ENCODE measurements at regions of chr19 and their contacts with region 1.

Region 1: GRCh38 chr19:37691881-37692504 is 27.6 kb downstream of the ZNF607 start:
- DNase-seq: peak; percentile 54 to 90 (median 80)
- ATAC-seq: peak; percentile 92
- H3K4me3 ChIP-seq: peak overlapping the region; percentile 58 to 73
- H3K4me3 Mint-ChIP-seq: peak overlapping the region; percentile 96
- H3K27ac ChIP-seq: peak overlapping the region; percentile 65 to 74
- H3K27ac Mint-ChIP-seq: peak overlapping the region; percentile 96
- H3K4me1 ChIP-seq: no peaks in the 10 kb centered on the region
- H3K4me1 Mint-ChIP-seq: peaks cover 13% of the 10 kb centered on the region
- H3K27me3 ChIP-seq: no peaks in the 10 kb centered on the region
- H3K27me3 Mint-ChIP-seq: no peaks in the 10 kb centered on the region
- CTCF ChIP-seq: no peak

Region 2: DNA sequence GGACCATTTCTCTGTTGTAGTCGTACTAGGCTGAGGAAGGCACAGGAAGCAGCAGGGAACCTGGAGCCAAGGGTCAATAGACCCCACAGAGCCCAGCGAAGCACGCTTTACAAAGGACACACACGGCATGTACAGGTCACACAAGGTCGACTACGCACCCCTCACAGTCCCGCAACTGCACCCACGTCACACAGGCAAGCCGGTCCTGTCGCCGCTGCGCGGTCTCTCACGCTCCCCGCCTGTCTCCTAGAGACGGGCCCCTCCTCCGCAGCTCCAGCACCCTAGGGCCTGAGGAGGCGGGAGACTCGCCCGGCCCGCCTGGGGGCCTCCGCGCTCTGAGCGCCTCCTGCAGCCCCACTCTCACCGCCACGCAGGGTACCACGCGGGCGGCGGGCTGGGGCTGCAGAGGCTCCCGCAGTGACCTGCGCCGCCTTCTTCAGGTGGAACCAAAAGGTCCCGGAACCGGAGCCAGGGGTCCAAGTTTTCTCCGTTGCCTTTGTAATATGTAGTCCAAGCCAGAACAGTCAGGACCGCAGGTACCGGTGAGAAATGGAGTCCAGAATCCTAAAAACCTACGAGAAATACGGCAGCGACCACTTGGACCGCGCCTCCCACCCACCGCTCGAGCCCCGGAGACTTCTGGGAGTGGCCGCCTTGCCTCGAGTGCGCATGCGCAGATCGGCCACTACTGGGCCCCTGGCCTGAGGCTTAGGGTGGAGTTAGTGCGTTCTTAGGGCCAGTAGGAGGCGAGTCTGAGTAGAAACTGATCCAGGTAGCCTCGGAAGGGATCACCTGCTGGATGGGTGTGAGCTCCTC is 27.3 kb after region 1 on chr19 and contains the start of gene ZNF607:
- CTCF ChIA-PET with region 1: interaction called, 3 read pairs
- POLR2A ChIA-PET with region 1: interaction called, 8 read pairs
- intact Hi-C with region 1: loop called in 1 of 2 experiments (anchors 1 kb)
- DNase-seq: peak; percentile 61 to 92 (median 81)
- ATAC-seq: peak; percentile 82
- H3K4me3 ChIP-seq: peak within 1 kb of the TSS; percentile 67 to 89
- H3K4me3 Mint-ChIP-seq: peak within 1 kb of the TSS; percentile 96
- H3K27ac ChIP-seq: peak within 1 kb of the TSS; percentile 73 to 79
- H3K27ac Mint-ChIP-seq: peak within 1 kb of the TSS; percentile 98
- H3K4me1 ChIP-seq: peaks cover 11% of the 10 kb centered on the region
- H3K4me1 Mint-ChIP-seq: peaks cover 22% of the 10 kb centered on the region
- H3K27me3 ChIP-seq: no peaks in the 10 kb centered on the region
- H3K27me3 Mint-ChIP-seq: no peaks in the 10 kb centered on the region
- CTCF ChIP-seq: no peak
- total RNA-seq, gene ZNF607: 2.9 to 3.3 TPM

Measured in CD8-positive, alpha-beta T cell (primary cell).